ENCODE measurements at regions of chr10 and their contacts with region 1.

Region 1: DNA sequence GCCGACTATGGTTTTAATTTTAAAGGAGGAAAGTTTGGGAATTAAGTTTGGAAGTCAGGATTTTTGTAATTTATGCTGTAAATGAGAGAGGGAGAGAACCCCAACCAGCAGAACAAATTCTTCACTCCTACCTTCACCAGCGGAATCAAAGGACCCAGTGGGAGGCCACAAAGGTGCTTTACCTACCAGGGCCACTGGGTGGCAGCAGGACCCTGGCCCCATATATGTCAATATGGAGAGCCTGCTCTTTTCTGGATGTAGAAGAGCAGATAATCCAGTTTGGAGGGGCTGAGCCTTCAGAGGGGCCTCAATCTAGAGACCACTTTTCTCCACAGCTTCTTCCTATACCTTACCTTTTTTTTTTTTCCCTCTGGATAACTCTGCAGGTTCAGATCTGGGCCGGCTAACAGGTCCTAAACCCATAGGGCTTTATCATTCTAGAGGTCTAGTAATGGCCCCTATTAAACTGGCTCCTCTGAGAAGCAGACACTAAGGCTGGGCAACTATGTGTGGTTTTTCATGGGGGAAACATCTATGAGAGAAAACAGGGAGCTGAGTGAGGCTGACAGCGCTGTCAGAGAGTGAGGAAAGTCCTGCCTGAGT is 8.5 kb upstream of the SCD start:
- DNase-seq: peak; percentile 88
- H3K4me3 Mint-ChIP-seq: no peak overlapping the region
- H3K27ac Mint-ChIP-seq: no peak overlapping the region
- H3K4me1 Mint-ChIP-seq: no peaks in the 10 kb centered on the region
- H3K27me3 Mint-ChIP-seq: peaks cover 4% of the 10 kb centered on the region

Region 2: GRCh38 chr10:100433253-100434240 is 95.0 kb after region 1 on chr10:
- CTCF ChIA-PET with region 1: interaction called, 288 read pairs
- POLR2A ChIA-PET with region 1: no interaction called
- intact Hi-C with region 1: loop called (anchors 1 kb)
- DNase-seq: peak; percentile 97
- H3K4me3 Mint-ChIP-seq: no peak overlapping the region
- H3K27ac Mint-ChIP-seq: peak overlapping the region; percentile 2
- H3K4me1 Mint-ChIP-seq: peaks cover 2% of the 10 kb centered on the region
- H3K27me3 Mint-ChIP-seq: no peaks in the 10 kb centered on the region

Region 3: DNA sequence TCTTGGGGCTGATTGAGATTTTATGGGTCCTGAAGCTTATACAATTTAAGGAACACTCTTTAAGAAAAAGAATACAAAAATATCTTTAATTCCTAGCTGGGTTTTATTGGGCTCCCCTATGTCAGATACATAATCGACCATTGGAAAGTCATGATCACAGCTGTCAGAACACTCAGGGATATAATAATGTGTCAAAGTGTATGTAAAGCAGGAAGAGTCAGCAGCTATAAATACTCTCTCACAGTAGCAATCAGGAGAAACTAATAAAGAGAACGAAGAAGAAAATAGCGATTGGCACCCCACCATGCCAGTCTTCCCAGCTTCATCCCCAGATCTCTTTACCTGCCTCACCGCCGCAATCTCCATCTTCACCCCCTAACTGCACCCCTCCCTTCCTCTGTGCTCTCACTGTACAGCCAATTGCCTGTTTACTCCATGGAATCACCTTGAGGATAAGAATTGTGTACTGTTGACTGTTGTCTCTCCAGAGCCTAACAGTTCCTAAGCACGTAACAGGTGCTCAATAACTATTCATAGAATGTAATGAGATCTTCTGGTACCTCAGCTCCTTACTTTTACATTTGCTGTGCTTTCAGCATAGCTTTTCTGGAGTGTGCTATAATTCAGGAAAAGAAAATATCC is 100.3 kb after region 1 on chr10:
- CTCF ChIA-PET with region 1: interaction called, 288 read pairs
- POLR2A ChIA-PET with region 1: no interaction called
- intact Hi-C with region 1: loop called (anchors 1 kb)
- DNase-seq: no peak
- H3K4me3 Mint-ChIP-seq: no peak overlapping the region
- H3K27ac Mint-ChIP-seq: no peak overlapping the region
- H3K4me1 Mint-ChIP-seq: peaks cover 2% of the 10 kb centered on the region
- H3K27me3 Mint-ChIP-seq: no peaks in the 10 kb centered on the region

Measured in activated CD4-positive, alpha-beta memory T cell treated with anti-CD3 and anti-CD28 coated beads for 36 hours (primary cell).